A549 (cell line): ENCODE measurements at regions of chr9 and their contacts with region 1.

Region 1: DNA sequence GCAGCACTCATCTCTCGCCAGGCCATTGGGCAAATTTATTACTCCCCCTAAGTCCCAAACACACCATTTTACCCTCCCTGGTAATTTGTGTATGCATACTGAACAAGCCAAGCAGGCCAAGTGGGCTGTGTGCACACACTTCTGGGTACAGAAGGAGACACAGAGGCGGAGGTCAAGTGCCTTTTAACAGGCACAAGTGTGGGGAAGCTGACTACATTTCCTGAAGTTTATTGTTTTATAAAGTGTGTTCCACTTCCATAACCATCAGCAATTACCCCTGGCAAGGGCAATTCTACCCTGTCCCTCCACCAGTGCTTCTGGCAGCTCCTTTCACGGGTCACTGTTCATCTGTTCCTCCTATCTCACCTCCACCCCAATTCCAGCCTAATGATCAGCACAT is 93.9 kb downstream of the SETX start:
- DNase-seq: no peak
- ATAC-seq: no peak
- H3K4me3 ChIP-seq: no peak overlapping the region
- H3K27ac ChIP-seq: no peak overlapping the region
- H3K4me1 ChIP-seq: 0 out of 3 replicates have a peak, but pooled peaks cover 4% of the 10 kb centered on the region
- CTCF ChIP-seq: no peak
- EP300 ChIP-seq: no peak
- POLR2A ChIP-seq: no peak
- RAD21 ChIP-seq: no peak

Region 2: DNA sequence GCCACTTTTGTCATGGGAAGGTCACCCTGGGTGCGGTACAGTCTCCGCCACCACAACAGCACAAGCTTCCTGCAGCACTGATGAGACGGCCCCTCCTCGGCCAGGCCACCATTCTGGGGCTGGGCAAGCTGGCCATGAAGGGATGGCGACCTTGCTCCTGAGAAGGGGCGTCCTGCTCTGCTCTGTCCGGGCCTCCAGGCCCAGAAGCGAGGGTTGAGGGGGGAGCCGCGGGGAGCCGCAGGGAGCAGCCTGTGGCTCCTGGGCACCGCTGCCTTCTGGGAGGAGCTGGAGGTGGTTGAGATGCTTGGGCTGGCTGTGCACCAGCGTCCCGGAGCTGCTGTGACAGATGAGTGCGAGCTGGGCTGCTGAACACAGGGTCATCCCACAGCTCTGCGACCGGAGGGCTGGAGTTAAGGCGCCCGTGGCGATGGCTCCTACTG is 436.7 kb before region 1 on chr9:
- CTCF ChIA-PET with region 1: no interaction called
- POLR2A ChIA-PET with region 1: no interaction called
- DNase-seq: no peak
- ATAC-seq: peak; percentile 21 to 45; a peak in 4 of 6 replicates
- H3K4me3 ChIP-seq: no peak overlapping the region
- H3K27ac ChIP-seq: no peak overlapping the region
- H3K4me1 ChIP-seq: no peaks in the 10 kb centered on the region
- CTCF ChIP-seq: no peak
- EP300 ChIP-seq: no peak
- POLR2A ChIP-seq: no peak
- RAD21 ChIP-seq: no peak

Region 3: GRCh38 chr9:132249123-132249522 is 11.7 kb before region 1 on chr9:
- CTCF ChIA-PET with region 1: interaction called, 62 read pairs
- POLR2A ChIA-PET with region 1: no interaction called
- DNase-seq: no peak
- ATAC-seq: no peak
- H3K4me3 ChIP-seq: no peak overlapping the region
- H3K27ac ChIP-seq: no peak overlapping the region
- H3K4me1 ChIP-seq: no peaks in the 10 kb centered on the region
- CTCF ChIP-seq: no peak
- EP300 ChIP-seq: no peak
- POLR2A ChIP-seq: no peak
- RAD21 ChIP-seq: no peak